ENCODE measurements at regions of chr6 and their contacts with region 1.

Region 1: DNA sequence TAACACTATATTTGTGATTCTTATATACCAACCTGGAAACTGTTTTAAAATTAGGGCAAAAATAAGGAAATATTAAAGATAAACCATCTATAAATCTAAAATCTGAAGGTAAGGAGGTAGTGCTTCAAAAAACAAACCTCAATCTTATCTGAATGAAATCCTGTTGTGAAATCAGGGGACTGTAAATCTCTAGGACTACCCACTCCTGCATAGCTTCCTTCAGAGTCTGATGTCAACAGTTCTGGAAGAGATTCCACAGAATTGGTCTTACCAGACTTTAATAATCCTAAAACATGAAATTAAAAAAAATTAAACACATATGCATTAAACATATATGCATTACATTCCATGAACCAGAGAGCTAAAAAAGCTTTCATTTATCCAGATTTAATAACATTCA is 51.4 kb downstream of the IBTK start:
- DNase-seq: no peak
- ATAC-seq: no peak
- H3K4me3 ChIP-seq: no peak overlapping the region
- H3K27ac ChIP-seq: no peak overlapping the region
- H3K4me1 ChIP-seq: no peaks in the 10 kb centered on the region
- H3K27me3 ChIP-seq: no peaks in the 10 kb centered on the region
- CTCF ChIP-seq: no peak
- EP300 ChIP-seq: no peak
- POLR2A ChIP-seq: no peak
- RAD21 ChIP-seq: no peak

Region 2: GRCh38 chr6:82182756-82183155 is 13.4 kb before region 1 on chr6:
- CTCF ChIA-PET with region 1: interaction called, 3 read pairs
- POLR2A ChIA-PET with region 1: no interaction called
- RAD21 ChIA-PET with region 1: no interaction called
- SMC1A ChIA-PET with region 1: interaction called, 13 read pairs
- in situ Hi-C with region 1: no loop called
- intact Hi-C with region 1: no loop called
- DNase-seq: no peak
- ATAC-seq: peak; percentile 48; the same call in 1 of the 3 replicates
- H3K4me3 ChIP-seq: no peak overlapping the region
- H3K27ac ChIP-seq: no peak overlapping the region
- H3K4me1 ChIP-seq: no peaks in the 10 kb centered on the region
- H3K27me3 ChIP-seq: no peaks in the 10 kb centered on the region
- CTCF ChIP-seq: no peak
- EP300 ChIP-seq: no peak
- POLR2A ChIP-seq: no peak
- RAD21 ChIP-seq: no peak

Measured in GM12878 (cell line).